HCT116 (cell line): ENCODE measurements at regions of chr10 and their contacts with region 1.

Region 1: DNA sequence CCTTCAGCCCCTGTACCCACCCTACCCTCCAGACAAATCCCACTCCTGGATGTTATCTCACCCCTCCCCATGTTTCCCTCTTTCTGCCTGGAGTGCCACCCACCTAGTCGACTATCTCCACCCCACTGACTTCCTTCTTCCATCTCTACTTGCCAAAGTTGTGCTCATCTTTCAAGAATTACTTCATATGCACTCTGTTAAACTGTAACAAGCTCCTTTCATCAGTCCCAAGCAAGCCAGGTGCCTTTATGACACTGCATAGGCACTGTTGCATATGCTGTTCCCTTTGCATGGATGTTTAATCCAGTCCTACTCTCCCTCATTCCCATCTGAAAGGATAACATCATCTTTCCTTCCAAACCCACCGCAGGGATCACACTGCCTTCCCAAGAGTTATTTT is 8.9 kb upstream of the CDK1 start:
- DNase-seq: no peak
- ATAC-seq: peak; percentile 22; the same call in 1 of the 2 replicates
- H3K4me3 ChIP-seq: no peak overlapping the region
- H3K27ac ChIP-seq: no peak overlapping the region
- H3K4me1 ChIP-seq: no peaks in the 10 kb centered on the region; a peak in 1 of 4 replicates
- H3K27me3 ChIP-seq: no peaks in the 10 kb centered on the region
- CTCF ChIP-seq: no peak
- POLR2A ChIP-seq: no peak
- RAD21 ChIP-seq: no peak

Region 2: GRCh38 chr10:60406173-60406572 is 363.2 kb before region 1 on chr10:
- CTCF ChIA-PET with region 1: no interaction called
- POLR2A ChIA-PET with region 1: no interaction called
- RAD21 ChIA-PET with region 1: no interaction called
- intact Hi-C with region 1: no loop called
- DNase-seq: no peak
- ATAC-seq: no peak
- H3K4me3 ChIP-seq: no peak overlapping the region
- H3K27ac ChIP-seq: no peak overlapping the region
- H3K4me1 ChIP-seq: no peaks in the 10 kb centered on the region
- H3K27me3 ChIP-seq: no peaks in the 10 kb centered on the region
- CTCF ChIP-seq: no peak
- POLR2A ChIP-seq: no peak
- RAD21 ChIP-seq: no peak

Region 3: GRCh38 chr10:60444494-60445064 is 324.8 kb before region 1 on chr10:
- CTCF ChIA-PET with region 1: interaction called, 11 read pairs
- POLR2A ChIA-PET with region 1: no interaction called
- RAD21 ChIA-PET with region 1: no interaction called
- intact Hi-C with region 1: loop called (anchors 2 kb)
- DNase-seq: peak; percentile 18
- ATAC-seq: no peak
- H3K4me3 ChIP-seq: no peak overlapping the region
- H3K27ac ChIP-seq: no peak overlapping the region
- H3K4me1 ChIP-seq: no peaks in the 10 kb centered on the region; a peak in 1 of 4 replicates
- H3K27me3 ChIP-seq: no peaks in the 10 kb centered on the region
- CTCF ChIP-seq: peak; percentile 36 to 70 (median 66); a peak in 4 of 6 replicates
- POLR2A ChIP-seq: no peak
- RAD21 ChIP-seq: peak; percentile 75

Region 4: GRCh38 chr10:60757420-60757895 is 11.9 kb before region 1 on chr10:
- CTCF ChIA-PET with region 1: no interaction called
- POLR2A ChIA-PET with region 1: no interaction called
- RAD21 ChIA-PET with region 1: no interaction called
- intact Hi-C with region 1: no loop called
- DNase-seq: no peak
- ATAC-seq: peak; percentile 49; the same call in 1 of the 2 replicates
- H3K4me3 ChIP-seq: no peak overlapping the region
- H3K27ac ChIP-seq: no peak overlapping the region
- H3K4me1 ChIP-seq: peaks cover 3 to 11% of the 10 kb centered on the region in 2 experiments; a peak in 2 of 4 replicates
- H3K27me3 ChIP-seq: no peaks in the 10 kb centered on the region
- CTCF ChIP-seq: no peak
- POLR2A ChIP-seq: no peak
- RAD21 ChIP-seq: no peak

Region 5: DNA sequence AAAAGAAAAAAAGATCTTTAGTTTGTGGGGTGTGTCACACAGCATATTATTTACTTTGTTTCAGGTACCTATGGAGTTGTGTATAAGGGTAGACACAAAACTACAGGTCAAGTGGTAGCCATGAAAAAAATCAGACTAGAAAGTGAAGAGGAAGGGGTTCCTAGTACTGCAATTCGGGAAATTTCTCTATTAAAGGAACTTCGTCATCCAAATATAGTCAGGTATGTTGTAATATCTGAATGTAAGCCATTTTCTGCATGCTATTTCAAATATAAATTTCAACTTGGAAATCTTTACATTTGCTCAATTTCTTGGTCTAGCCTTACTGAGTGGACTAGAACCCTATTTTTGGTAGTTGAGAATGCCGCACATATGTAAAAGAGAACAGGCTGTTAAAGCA is 15.2 kb after region 1 on chr10:
- CTCF ChIA-PET with region 1: no interaction called
- POLR2A ChIA-PET with region 1: no interaction called
- RAD21 ChIA-PET with region 1: no interaction called
- intact Hi-C with region 1: no loop called
- DNase-seq: no peak
- ATAC-seq: no peak
- H3K4me3 ChIP-seq: no peak overlapping the region
- H3K27ac ChIP-seq: no peak overlapping the region
- H3K4me1 ChIP-seq: peaks cover 0 to 8% of the 10 kb centered on the region in 2 experiments; a peak in 2 of 4 replicates
- H3K27me3 ChIP-seq: no peaks in the 10 kb centered on the region
- CTCF ChIP-seq: no peak
- POLR2A ChIP-seq: no peak
- RAD21 ChIP-seq: no peak